Dorsolateral prefrontal cortex (tissue), 120 donors: ENCODE measurements at regions of chr15 and their contacts with region 1.

Region 1: GRCh38 chr15:30922480-30923311 is 19.0 kb downstream of the FAN1 start:
- DNase-seq: peak; percentile 26 to 95 (median 88)
- H3K4me3 ChIP-seq: peak overlapping the region in 37 of 59 donors; percentile 1 to 49 (median 22)
- H3K27ac ChIP-seq: peak overlapping the region; percentile 81 to 100 (median 97)
- H3K27me3 ChIP-seq: no peaks in the 10 kb centered on the region
- CTCF ChIP-seq: peak in 18 of 56 donors; percentile 5 to 38 (median 18)

Region 2: GRCh38 chr15:30783019-30783418 is 139.7 kb before region 1 on chr15:
- intact Hi-C with region 1: no loop called
- DNase-seq: no peak
- H3K4me3 ChIP-seq: no peak overlapping the region
- H3K27ac ChIP-seq: no peak overlapping the region
- H3K27me3 ChIP-seq: no peaks in the 10 kb centered on the region
- CTCF ChIP-seq: no peak

Region 3: DNA sequence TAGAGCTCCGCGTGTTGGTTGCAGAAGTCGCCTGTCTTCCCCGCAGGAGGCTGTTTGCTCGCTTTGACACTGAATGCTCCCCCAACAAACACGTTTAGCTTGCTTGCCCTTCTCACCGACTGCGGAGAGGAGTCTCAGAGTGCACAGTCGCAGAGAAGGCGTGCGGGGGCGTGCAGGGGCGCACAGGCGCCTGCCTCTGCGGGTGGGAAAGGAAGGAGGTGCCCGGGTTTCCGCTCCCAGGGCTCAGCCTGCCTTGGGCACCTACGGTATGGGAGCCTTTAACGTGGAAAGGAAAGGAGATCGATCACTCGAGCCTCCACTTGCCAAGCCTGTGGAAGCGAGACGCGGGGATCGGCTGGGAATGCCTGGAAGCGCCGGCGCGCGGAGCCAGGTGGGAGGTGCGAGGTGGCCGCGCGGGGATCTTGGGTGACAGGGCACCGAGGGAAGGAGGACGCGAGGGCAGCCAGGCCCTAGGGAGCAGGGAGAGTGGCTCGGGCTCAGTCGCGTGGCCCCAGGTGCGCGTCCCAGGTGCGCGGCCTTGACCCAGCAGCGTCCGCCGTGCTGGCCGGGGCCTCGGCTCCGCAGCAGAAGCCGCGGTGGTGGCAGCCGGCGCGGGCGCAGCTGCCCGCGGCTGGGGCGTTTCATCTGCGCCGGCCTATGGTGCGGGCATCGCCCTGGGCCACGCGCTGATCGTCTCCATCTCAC is 19.0 kb before region 1 on chr15 and contains the start of gene FAN1:
- intact Hi-C with region 1: loop called in 1 of 2 experiments (anchors 2 kb)
- DNase-seq: peak; percentile 75 to 96 (median 90)
- H3K4me3 ChIP-seq: peak within 1 kb of the TSS; percentile 51 to 98 (median 85)
- H3K27ac ChIP-seq: peak within 1 kb of the TSS; percentile 20 to 96 (median 87)
- H3K27me3 ChIP-seq: no peaks in the 10 kb centered on the region
- CTCF ChIP-seq: peak in 27 of 56 donors; percentile 13 to 53 (median 30)
- total RNA-seq, gene FAN1: 30.1 to 55.7 (median 39.8) TPM

Region 4: GRCh38 chr15:30984542-30984941 is 61.8 kb after region 1 on chr15:
- intact Hi-C with region 1: loop called (anchors 1 to 5 kb)
- DNase-seq: peak in 4 of 10 donors; percentile 25 to 61 (median 50)
- H3K4me3 ChIP-seq: peak overlapping the region in 54 of 59 donors; percentile 1 to 61 (median 27)
- H3K27ac ChIP-seq: peak overlapping the region; percentile 43 to 98 (median 93)
- H3K27me3 ChIP-seq: no peaks in the 10 kb centered on the region
- CTCF ChIP-seq: peak in 4 of 56 donors; percentile 8 to 26 (median 12)

Region 5: DNA sequence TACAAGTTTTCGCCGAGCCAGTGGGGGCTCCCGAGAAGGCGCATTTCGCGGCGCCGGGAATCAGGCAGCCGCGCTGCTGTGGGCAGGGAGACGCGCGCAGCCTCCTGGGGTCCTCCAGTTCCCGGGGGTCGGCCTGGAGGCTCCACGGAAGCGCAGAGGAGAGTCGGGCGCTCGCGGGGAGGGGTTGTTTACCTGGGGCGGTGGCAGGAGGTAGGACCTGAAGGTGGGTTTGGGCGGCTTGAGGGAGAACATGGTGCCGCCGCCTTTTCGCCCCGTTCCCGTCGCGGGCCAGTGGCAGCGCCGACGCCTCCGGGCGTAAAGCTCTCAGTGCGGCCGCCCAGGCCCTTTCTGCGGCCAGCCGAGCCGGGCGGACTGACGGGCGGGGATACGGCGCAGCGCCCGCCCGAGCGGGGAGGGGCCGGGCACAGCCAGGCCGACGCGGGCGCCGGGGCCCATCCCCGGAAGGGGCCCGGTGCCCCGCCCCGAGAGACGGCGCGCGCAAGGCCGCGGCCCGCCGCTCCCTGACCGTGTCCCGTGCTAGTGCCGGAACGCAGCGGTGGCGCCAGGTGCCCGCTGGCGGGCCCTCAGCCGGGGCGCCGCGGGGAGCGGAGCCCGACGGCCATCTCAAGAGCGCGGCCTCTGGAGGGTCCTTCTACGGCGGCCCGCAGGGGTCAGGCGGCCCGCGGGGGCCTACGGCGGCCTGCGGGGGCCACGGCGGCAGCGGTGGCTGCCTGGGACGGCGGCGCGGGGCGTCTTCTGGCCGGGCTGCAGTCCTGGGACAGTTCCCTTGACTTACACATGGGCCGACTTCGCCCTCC is 68.8 kb after region 1 on chr15 and contains the start of gene MTMR10:
- intact Hi-C with region 1: loop called in 1 of 2 experiments (anchors 2 kb)
- DNase-seq: peak; percentile 42 to 85 (median 57)
- H3K4me3 ChIP-seq: peak within 1 kb of the TSS; percentile 67 to 100 (median 94)
- H3K27ac ChIP-seq: peak within 1 kb of the TSS; percentile 77 to 99 (median 95)
- H3K27me3 ChIP-seq: no peaks in the 10 kb centered on the region
- CTCF ChIP-seq: peak in 22 of 56 donors; percentile 7 to 40 (median 18)
- total RNA-seq, gene MTMR10: 33.2 to 154 (median 67.8) TPM

Region 6: DNA sequence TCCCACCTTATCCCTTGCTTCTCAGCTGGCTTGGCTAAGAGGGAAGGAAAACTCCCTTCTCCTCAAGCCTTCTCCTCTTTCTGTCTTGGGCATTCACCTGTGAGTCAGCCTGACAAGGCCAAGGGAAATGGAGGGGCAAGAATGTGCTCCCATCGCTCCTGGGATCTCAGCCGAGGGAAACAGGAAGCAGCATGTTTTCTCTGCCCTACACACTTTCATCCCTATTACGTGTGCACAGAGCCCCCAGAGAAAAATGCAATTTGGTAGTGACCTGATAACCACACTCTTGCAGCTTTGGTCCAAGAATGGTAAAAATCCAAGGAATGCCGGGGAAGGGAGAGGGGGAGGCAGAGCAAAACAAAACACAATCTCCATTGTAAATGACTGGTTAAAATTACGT is 101.6 kb after region 1 on chr15:
- intact Hi-C with region 1: no loop called
- DNase-seq: no peak
- H3K4me3 ChIP-seq: no peak overlapping the region
- H3K27ac ChIP-seq: no peak overlapping the region
- H3K27me3 ChIP-seq: peaks cover 0 to 5% (median 0%) of the 10 kb centered on the region in 45 donors
- CTCF ChIP-seq: no peak

Region 7: DNA sequence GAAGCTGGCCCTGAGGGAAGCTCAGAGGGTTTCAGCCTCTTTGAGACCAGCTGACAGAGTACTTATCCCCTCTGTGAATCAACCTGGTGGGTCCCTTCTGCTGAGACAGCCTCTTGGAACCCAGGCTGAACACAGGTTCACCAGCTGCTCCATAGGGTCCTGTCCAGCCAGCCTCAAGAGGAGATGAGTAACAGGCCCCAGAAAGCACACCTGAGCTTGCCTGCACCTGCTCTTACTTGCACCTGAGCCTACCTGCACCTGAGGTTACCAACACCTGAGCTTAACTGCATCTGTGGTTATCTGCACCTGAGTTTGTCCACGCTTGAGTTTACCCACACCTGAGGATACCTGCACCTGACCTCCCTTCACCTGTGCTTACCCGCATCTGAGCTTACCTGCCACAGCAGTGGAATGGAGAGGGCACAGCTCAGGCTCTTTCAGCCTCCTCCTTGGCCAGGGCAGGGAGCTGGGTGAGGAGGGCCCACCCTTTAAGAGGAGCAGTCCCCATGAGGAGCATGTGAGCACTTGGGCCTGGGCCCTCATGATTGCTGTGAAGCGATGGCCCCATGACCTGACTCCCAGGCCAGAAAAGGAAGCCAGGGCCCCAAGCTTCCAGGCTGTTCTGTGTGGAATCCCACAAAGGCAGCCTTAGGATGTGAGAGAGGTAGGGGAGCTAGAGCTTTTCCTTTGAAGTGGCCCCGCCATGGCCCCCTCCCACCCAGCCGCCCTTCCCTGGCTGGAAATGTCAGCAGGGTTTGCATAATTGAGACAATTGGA is 178.8 kb after region 1 on chr15 and contains the start of gene TRPM1:
- intact Hi-C with region 1: loop called in 1 of 2 experiments (anchors 5 kb)
- DNase-seq: no peak
- H3K4me3 ChIP-seq: no peak within 1 kb of the TSS
- H3K27ac ChIP-seq: peak within 1 kb of the TSS in 38 of 59 donors; percentile 31 to 89 (median 74)
- H3K27me3 ChIP-seq: no peaks in the 10 kb centered on the region
- CTCF ChIP-seq: no peak
- total RNA-seq, gene TRPM1: 0.06 to 2.4 (median 0.70) TPM in 60 of 120 experiments, not detected in the others

Region 8: GRCh38 chr15:31128919-31129768 is 206.4 kb after region 1 on chr15:
- intact Hi-C with region 1: loop called in 1 of 2 experiments (anchors 5 kb)
- DNase-seq: peak; percentile 60 to 87 (median 74)
- H3K4me3 ChIP-seq: peak overlapping the region in 16 of 59 donors; percentile 3 to 47 (median 23)
- H3K27ac ChIP-seq: peak overlapping the region in 1 of 59 donors; percentile 26
- H3K27me3 ChIP-seq: no peaks in the 10 kb centered on the region
- CTCF ChIP-seq: peak; percentile 75 to 98 (median 93)

Region 9: DNA sequence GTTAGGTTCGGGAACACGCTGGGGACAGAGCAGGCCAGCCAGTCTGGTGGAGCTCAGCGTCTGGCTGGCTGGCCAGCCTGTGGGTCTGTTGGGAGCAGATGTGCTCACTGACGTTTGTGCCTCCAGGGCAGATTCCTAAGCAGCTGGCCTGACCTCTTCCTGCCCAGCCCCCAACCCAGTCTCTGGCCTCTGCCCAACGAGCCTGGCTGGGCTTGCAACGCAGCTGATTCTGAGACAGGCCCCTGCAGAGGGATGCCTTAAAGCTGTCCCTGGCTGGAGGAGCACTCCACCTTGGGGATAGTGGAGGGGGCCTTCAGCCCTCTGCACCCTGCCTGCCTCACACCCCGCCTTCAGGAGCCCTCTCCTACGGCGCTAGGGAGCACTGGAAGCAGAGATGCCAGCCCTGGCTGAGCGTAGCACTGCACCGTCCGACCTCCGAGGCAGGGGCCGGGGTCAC is 450.0 kb after region 1 on chr15:
- intact Hi-C with region 1: loop called in 1 of 2 experiments (anchors 10 kb)
- DNase-seq: peak in 6 of 10 donors; percentile 63 to 78 (median 74)
- H3K4me3 ChIP-seq: peak overlapping the region in 1 of 59 donors; percentile 1
- H3K27ac ChIP-seq: peak overlapping the region in 51 of 59 donors; percentile 0 to 100 (median 59)
- H3K27me3 ChIP-seq: no peaks in the 10 kb centered on the region
- CTCF ChIP-seq: peak in 5 of 56 donors; percentile 7 to 16 (median 12)